Dorsolateral prefrontal cortex (tissue), 120 donors: ENCODE measurements at regions of chr4 and their contacts with region 1.

Region 1: GRCh38 chr4:152014280-152014679 is 253.5 kb upstream of the GATB start:
- DNase-seq: no peak
- H3K4me3 ChIP-seq: no peak overlapping the region
- H3K27ac ChIP-seq: peak overlapping the region in 56 of 59 donors; percentile 1 to 91 (median 72)
- H3K27me3 ChIP-seq: peaks cover 0 to 4% (median 0%) of the 10 kb centered on the region in 45 donors
- CTCF ChIP-seq: no peak

Region 2: DNA sequence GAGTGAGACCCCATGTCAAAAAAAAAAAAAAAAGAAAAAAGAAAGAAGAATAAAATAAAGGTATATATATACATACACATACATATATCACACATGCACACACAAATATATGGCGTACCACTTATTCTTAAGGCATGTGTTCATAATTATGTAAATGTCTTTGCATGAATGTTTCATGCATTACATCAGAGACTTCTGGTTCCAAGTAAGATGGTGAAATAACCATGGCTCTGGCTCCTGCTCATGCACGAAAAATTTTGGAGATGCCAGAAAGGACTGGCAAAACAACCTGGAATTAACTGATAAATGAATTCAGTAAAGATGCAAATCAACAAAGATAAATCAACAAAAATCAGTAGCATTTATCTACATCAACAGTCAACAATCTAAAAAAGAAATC is 625.0 kb before region 1 on chr4:
- intact Hi-C with region 1: no loop called
- DNase-seq: no peak
- H3K4me3 ChIP-seq: no peak overlapping the region
- H3K27ac ChIP-seq: no peak overlapping the region
- H3K27me3 ChIP-seq: no peaks in the 10 kb centered on the region
- CTCF ChIP-seq: no peak

Region 3: DNA sequence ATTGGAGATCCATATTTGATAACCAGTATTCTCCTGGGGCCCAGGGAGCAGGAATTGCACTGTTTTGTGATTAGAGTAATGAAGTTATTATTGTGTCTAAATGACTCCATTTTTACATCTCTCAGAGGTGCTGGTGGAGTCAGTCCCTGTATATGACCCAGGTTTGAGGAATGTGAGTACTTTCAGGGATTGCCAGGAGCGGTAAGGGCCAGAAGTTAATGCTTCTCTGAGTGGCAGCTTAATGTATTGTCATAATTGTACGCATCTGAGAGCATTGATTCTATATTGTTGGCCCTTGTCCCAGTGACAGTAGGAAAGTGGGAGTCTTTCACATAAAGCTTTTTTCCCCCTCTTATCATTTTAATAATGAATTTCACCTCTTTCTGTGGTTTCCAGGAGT is 399.7 kb before region 1 on chr4:
- intact Hi-C with region 1: no loop called
- DNase-seq: no peak
- H3K4me3 ChIP-seq: no peak overlapping the region
- H3K27ac ChIP-seq: no peak overlapping the region
- H3K27me3 ChIP-seq: no peaks in the 10 kb centered on the region
- CTCF ChIP-seq: no peak

Region 4: GRCh38 chr4:151960449-151961230 is 53.6 kb before region 1 on chr4:
- intact Hi-C with region 1: loop called in 1 of 2 experiments (anchors 2 kb)
- DNase-seq: peak; percentile 23 to 81 (median 62)
- H3K4me3 ChIP-seq: peak overlapping the region in 1 of 59 donors; percentile 4
- H3K27ac ChIP-seq: peak overlapping the region in 58 of 59 donors; percentile 24 to 93 (median 78)
- H3K27me3 ChIP-seq: no peaks in the 10 kb centered on the region
- CTCF ChIP-seq: no peak

Region 5: DNA sequence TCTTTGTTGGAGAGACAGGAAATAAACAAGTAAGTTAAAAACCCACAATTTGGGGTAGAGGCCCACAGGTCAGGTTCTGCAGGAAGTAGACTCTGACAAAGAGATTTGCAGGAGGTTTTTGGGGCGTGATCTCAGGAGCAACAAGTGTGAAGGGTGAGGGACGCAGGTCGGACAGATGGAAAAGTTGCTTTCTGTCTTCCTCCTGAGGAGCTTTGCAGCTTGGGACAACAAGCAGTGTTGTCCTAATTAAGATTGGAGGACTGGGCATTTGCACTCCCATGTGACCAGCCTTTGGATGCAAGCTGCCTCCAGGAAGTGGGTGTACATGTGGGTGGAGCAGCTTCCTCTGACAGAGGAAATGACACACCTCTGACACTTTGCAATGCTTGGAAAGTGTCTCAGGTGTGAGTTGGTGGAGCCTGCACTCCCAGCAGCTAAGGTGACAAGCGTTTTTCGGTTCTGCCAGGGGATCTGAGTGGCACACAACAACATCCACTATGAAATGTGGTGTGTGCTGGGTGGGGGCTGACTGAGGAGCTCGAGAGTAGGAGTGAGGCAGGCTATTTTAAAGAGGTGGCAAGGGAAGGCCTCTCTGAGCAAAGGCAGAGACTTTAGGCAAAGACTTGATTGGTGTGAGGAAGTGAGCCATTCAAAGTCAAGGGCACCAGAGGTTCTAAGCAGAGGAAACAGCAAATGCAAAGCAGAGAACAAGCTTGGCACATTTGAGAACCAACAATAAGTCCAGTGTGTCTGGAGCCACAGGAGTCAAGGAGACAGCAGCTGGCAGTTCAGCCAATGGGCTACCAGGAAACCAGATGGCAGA is 86.3 kb after region 1 on chr4:
- intact Hi-C with region 1: loop called in 1 of 2 experiments (anchors 5 kb)
- DNase-seq: no peak
- H3K4me3 ChIP-seq: no peak overlapping the region
- H3K27ac ChIP-seq: peak overlapping the region in 56 of 59 donors; percentile 17 to 95 (median 80)
- H3K27me3 ChIP-seq: peaks cover 0 to 4% (median 0%) of the 10 kb centered on the region in 45 donors
- CTCF ChIP-seq: no peak